Naive thymus-derived CD4-positive, alpha-beta T cell (primary cell): ENCODE measurements at regions of chr2 and their contacts with region 1.

Region 1: GRCh38 chr2:152740743-152741328 is 22.4 kb downstream of the ARL6IP6 start:
- DNase-seq: peak in 7 of 9 donors; percentile 13 to 53 (median 51)
- ATAC-seq: peak; percentile 93
- H3K4me3 ChIP-seq: no peak overlapping the region
- H3K4me3 Mint-ChIP-seq: no peak overlapping the region
- H3K27ac ChIP-seq: no peak overlapping the region
- H3K27ac Mint-ChIP-seq: no peak overlapping the region
- H3K4me1 ChIP-seq: no peaks in the 10 kb centered on the region
- H3K4me1 Mint-ChIP-seq: peaks cover 0 to 9% (median 3%) of the 10 kb centered on the region in 7 donors
- H3K27me3 ChIP-seq: no peaks in the 10 kb centered on the region
- H3K27me3 Mint-ChIP-seq: no peaks in the 10 kb centered on the region

Region 2: GRCh38 chr2:152730591-152731303 is 10.1 kb before region 1 on chr2:
- CTCF ChIA-PET with region 1: interaction called, 3 read pairs
- POLR2A ChIA-PET with region 1: no interaction called
- intact Hi-C with region 1: loop called in 1 of 2 experiments (anchors 1 kb)
- DNase-seq: peak in 6 of 9 donors; percentile 15 to 47 (median 40)
- ATAC-seq: peak; percentile 96
- H3K4me3 ChIP-seq: no peak overlapping the region
- H3K4me3 Mint-ChIP-seq: peak overlapping the region in 6 of 10 donors; percentile 4 to 15 (median 10)
- H3K27ac ChIP-seq: no peak overlapping the region
- H3K27ac Mint-ChIP-seq: peak overlapping the region in 3 of 9 donors; percentile 1 to 33 (median 17)
- H3K4me1 ChIP-seq: peaks cover 17 to 21% of the 10 kb centered on the region in 2 donors
- H3K4me1 Mint-ChIP-seq: peaks cover 20 to 35% (median 25%) of the 10 kb centered on the region in 7 donors
- H3K27me3 ChIP-seq: no peaks in the 10 kb centered on the region
- H3K27me3 Mint-ChIP-seq: no peaks in the 10 kb centered on the region